ENCODE measurements at regions of chr2 and their contacts with region 1.

Region 1: DNA sequence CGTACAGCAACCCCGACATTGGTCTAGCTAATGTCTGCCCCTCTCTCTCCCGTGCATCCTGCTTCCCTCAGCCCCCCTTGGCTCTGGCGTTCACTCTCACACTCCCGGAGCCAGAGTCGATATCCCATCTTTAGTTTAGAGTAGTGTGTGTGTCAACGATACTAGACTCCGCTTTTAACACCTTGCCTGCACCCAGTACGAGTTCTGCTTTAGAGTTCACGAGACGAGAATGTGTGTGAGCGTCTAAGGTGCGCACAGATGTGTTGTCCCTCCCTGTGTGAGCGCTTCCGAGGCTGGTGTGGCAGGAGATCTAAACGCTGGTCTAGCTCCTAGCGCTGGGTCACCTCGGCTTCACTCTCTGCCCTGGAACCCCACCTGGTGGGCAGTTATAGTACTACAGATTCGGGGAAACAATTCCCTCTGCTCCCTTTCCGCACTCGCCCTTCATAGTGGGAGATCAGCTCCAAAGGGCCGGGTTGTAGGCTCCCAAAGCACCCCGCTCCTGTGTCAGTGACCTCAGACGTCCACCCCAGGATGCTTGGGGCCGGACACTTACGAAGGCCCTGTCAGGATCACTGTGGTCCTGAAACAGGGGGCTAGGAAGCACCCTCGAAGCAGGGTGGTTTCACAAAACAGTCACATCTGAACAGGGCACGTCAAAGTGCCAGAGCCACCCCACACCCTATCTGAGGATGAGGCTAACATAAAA is 2.6 kb upstream of the CYP26B1 start:
- DNase-seq: peak; percentile 91
- H3K4me3 Mint-ChIP-seq: peak overlapping the region; percentile 79
- H3K27ac Mint-ChIP-seq: no peak overlapping the region
- H3K4me1 Mint-ChIP-seq: peaks cover 27% of the 10 kb centered on the region
- H3K27me3 Mint-ChIP-seq: peaks cover 41% of the 10 kb centered on the region
- CTCF ChIP-seq: peak; percentile 81

Region 2: GRCh38 chr2:71545572-71546274 is 604.6 kb before region 1 on chr2:
- CTCF ChIA-PET with region 1: interaction called, 59 read pairs
- POLR2A ChIA-PET with region 1: interaction called, 5 read pairs
- intact Hi-C with region 1: loop called (anchors 1 kb)
- DNase-seq: peak; percentile 63
- H3K4me3 Mint-ChIP-seq: no peak overlapping the region
- H3K27ac Mint-ChIP-seq: no peak overlapping the region
- H3K4me1 Mint-ChIP-seq: peaks cover 5% of the 10 kb centered on the region
- H3K27me3 Mint-ChIP-seq: peaks cover 29% of the 10 kb centered on the region
- CTCF ChIP-seq: peak; percentile 83

Region 3: GRCh38 chr2:71609958-71610357 is 540.4 kb before region 1 on chr2:
- CTCF ChIA-PET with region 1: interaction called, 9 read pairs
- POLR2A ChIA-PET with region 1: interaction called, 4 read pairs
- intact Hi-C with region 1: loop called (anchors 5 kb)
- DNase-seq: peak; percentile 33
- H3K4me3 Mint-ChIP-seq: no peak overlapping the region
- H3K27ac Mint-ChIP-seq: no peak overlapping the region
- H3K4me1 Mint-ChIP-seq: peaks cover 5% of the 10 kb centered on the region
- H3K27me3 Mint-ChIP-seq: peaks cover 47% of the 10 kb centered on the region
- CTCF ChIP-seq: peak; percentile 23

Region 4: DNA sequence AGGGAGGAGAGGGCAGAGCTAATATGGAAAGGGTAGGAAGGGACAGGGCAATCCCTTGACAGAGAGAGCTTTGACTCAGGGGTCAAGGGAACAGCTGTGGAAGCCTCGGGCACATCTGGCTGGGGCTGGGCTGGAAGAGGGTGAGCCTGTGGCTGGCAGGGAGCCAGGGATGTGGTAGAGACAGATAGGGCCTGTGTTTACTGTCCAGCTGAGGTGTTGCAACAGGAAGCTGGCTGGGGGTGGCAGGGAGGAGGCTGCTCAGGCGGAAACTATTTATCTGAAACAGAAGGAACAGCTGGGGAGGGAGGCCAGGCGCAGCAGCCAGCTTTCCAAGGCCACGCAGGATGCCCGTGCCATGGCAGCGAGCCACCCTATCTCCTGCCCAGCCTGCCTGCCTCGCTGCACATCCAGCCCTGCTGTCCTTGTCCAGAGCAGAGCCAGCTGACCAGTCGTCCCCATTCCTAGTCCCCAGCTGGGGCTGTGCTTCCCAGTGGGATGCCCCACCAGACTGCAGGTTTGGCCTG is 267.3 kb before region 1 on chr2:
- CTCF ChIA-PET with region 1: interaction called, 4 read pairs
- POLR2A ChIA-PET with region 1: interaction called, 4 read pairs
- intact Hi-C with region 1: loop called (anchors 5 kb)
- DNase-seq: peak; percentile 97
- H3K4me3 Mint-ChIP-seq: peak overlapping the region; percentile 2
- H3K27ac Mint-ChIP-seq: no peak overlapping the region
- H3K4me1 Mint-ChIP-seq: peaks cover 40% of the 10 kb centered on the region
- H3K27me3 Mint-ChIP-seq: peaks cover under 1% of the 10 kb centered on the region
- CTCF ChIP-seq: no peak

Region 5: DNA sequence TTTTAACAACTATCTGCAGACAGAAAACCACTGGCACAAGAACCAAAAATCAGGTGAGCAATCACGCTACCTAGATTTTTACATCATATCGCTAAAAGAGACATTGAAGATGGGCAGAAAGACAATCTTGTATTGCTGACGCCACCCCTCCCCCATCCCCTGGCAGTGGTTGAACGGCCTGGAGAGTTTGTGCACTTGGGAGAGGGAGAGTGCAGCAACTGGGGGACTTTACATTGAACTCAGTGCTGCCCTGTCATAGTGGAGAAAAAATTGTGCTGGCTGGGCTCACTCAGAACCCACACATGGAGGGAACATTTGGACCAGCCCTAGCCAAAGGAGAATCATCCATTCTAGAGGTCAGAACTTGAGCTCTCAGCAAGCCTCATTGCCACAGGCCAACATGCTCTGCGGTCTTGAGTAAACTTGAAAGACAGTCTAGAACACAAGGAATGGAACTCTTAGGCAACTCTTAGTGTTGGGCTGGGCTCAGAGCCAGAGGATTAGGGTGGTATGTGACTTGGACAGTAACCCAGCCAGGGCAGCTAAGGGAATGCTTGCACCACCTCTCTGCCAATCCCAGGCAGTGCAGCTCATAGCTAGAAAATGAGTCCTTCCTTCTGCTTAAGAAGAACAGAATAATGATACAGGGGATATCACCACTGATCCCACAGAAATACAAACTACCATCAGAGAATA is 217.4 kb after region 1 on chr2:
- CTCF ChIA-PET with region 1: interaction called, 9 read pairs
- POLR2A ChIA-PET with region 1: interaction called, 5 read pairs
- intact Hi-C with region 1: loop called (anchors 1 kb)
- DNase-seq: peak; percentile 100
- H3K4me3 Mint-ChIP-seq: peak overlapping the region; percentile 25
- H3K27ac Mint-ChIP-seq: no peak overlapping the region
- H3K4me1 Mint-ChIP-seq: peaks cover 21% of the 10 kb centered on the region
- H3K27me3 Mint-ChIP-seq: no peaks in the 10 kb centered on the region
- CTCF ChIP-seq: peak; percentile 58

Region 6: GRCh38 chr2:72745679-72746368 is 595.5 kb after region 1 on chr2:
- CTCF ChIA-PET with region 1: interaction called, 7 read pairs
- POLR2A ChIA-PET with region 1: no interaction called
- intact Hi-C with region 1: loop called (anchors 2 kb)
- DNase-seq: peak; percentile 72
- H3K4me3 Mint-ChIP-seq: no peak overlapping the region
- H3K27ac Mint-ChIP-seq: no peak overlapping the region
- H3K4me1 Mint-ChIP-seq: no peaks in the 10 kb centered on the region
- H3K27me3 Mint-ChIP-seq: no peaks in the 10 kb centered on the region
- CTCF ChIP-seq: peak; percentile 68

Measured in MCF 10A (cell line).